ENCODE measurements at regions of chrX and their contacts with region 1.

Region 1: GRCh38 chrX:73930300-73930699 is 367.3 kb downstream of the CHIC1 start:
- H3K4me3 ChIP-seq: no peak overlapping the region
- H3K27ac ChIP-seq: no peak overlapping the region
- H3K4me1 ChIP-seq: no peaks in the 10 kb centered on the region
- CTCF ChIP-seq: no peak

Region 2: GRCh38 chrX:73943693-73944562 is 13.6 kb after region 1 on chrX:
- CTCF ChIA-PET with region 1: no interaction called
- POLR2A ChIA-PET with region 1: interaction called, 12 read pairs
- H3K4me3 ChIP-seq: peak overlapping the region; percentile 80
- H3K27ac ChIP-seq: peak overlapping the region; percentile 98
- H3K4me1 ChIP-seq: peaks cover 12% of the 10 kb centered on the region
- CTCF ChIP-seq: peak; percentile 87

Region 3: GRCh38 chrX:74023203-74023602 is 92.9 kb after region 1 on chrX:
- CTCF ChIA-PET with region 1: no interaction called
- POLR2A ChIA-PET with region 1: no interaction called
- H3K4me3 ChIP-seq: no peak overlapping the region
- H3K27ac ChIP-seq: no peak overlapping the region
- H3K4me1 ChIP-seq: no peaks in the 10 kb centered on the region
- CTCF ChIP-seq: no peak

Region 4: GRCh38 chrX:74061879-74062278 is 131.6 kb after region 1 on chrX:
- CTCF ChIA-PET with region 1: no interaction called
- POLR2A ChIA-PET with region 1: no interaction called
- H3K4me3 ChIP-seq: no peak overlapping the region
- H3K27ac ChIP-seq: no peak overlapping the region
- H3K4me1 ChIP-seq: no peaks in the 10 kb centered on the region
- CTCF ChIP-seq: no peak

Measured in HEK293 (cell line).